Common myeloid progenitor, CD34-positive (primary cell): ENCODE measurements at regions of chr20 and their contacts with region 1.

Region 1: GRCh38 chr20:62652051-62652926 is 10.0 kb downstream of the SLCO4A1 start:
- DNase-seq: peak; percentile 52 to 72 (median 70)
- H3K4me3 ChIP-seq: peak overlapping the region in 5 of 7 experiments; percentile 12 to 64 (median 29)
- H3K27ac ChIP-seq: peak overlapping the region in 1 of 2 experiments; percentile 66
- H3K4me1 ChIP-seq: peaks cover 3 to 62% (median 32%) of the 10 kb centered on the region in 4 experiments
- H3K27me3 ChIP-seq: no peaks in the 10 kb centered on the region

Region 2: GRCh38 chr20:62571667-62572344 is 80.5 kb before region 1 on chr20:
- CTCF ChIA-PET with region 1: no interaction called
- POLR2A ChIA-PET with region 1: no interaction called
- DNase-seq: peak in 1 of 3 donors; percentile 48
- H3K4me3 ChIP-seq: no peak overlapping the region
- H3K27ac ChIP-seq: no peak overlapping the region
- H3K4me1 ChIP-seq: peaks cover 0 to 20% (median 3%) of the 10 kb centered on the region in 4 experiments
- H3K27me3 ChIP-seq: peaks cover 0 to 40% (median 6%) of the 10 kb centered on the region in 5 experiments

Region 3: DNA sequence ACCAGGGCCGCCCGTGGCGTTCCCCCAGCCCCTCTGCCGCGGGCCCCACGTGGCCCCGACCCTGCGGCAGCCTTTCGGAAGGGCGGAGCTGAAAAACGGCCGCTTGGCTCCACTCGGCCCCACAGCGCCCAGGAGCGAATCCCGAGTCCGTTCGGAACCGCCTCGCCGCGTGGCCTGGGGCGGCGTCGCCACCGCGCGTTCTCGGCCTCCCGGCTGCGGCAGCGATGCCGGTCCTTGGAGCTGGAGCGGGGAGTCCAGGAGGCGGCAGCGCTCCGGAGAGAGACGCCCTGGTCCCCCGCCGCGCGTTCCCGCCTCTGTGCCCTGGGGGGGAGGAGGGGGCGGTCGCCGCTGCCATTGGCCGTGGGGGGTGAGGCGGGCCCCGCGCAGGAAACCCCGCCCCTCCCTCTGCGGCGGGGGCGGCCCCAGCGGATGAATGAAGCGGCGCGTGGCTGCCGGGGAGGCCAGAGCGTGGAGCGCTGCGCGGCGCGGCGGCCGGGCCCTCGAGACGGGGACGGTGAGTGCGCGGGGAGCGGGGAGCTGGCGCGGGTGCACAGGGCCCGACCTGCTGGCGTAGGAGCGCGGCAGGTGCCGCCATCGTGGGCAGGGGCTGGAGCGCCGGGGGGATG is 10.1 kb before region 1 on chr20 and contains the start of gene SLCO4A1:
- CTCF ChIA-PET with region 1: interaction called, 13 read pairs
- POLR2A ChIA-PET with region 1: interaction called, 23 read pairs
- DNase-seq: peak; percentile 72 to 88 (median 84)
- H3K4me3 ChIP-seq: peak within 1 kb of the TSS; percentile 54 to 82 (median 67)
- H3K27ac ChIP-seq: peak within 1 kb of the TSS in 1 of 2 experiments; percentile 51
- H3K4me1 ChIP-seq: peaks cover 0 to 63% (median 58%) of the 10 kb centered on the region in 4 experiments
- H3K27me3 ChIP-seq: no peaks in the 10 kb centered on the region